PC-9 (cell line): ENCODE measurements at regions of chr11 and their contacts with region 1.

Region 1: GRCh38 chr11:33722579-33723225 is 13.5 kb downstream of the CD59 start:
- DNase-seq: peak; percentile 70 to 73
- H3K4me3 ChIP-seq: no peak overlapping the region
- H3K27ac ChIP-seq: peak overlapping the region; percentile 67
- H3K4me1 ChIP-seq: peaks cover 38% of the 10 kb centered on the region
- H3K27me3 ChIP-seq: no peaks in the 10 kb centered on the region
- CTCF ChIP-seq: no peak

Region 2: GRCh38 chr11:32137263-32137662 is 1585.4 kb before region 1 on chr11:
- CTCF ChIA-PET with region 1: interaction called, 13 read pairs
- POLR2A ChIA-PET with region 1: no interaction called
- intact Hi-C with region 1: no loop called
- DNase-seq: peak in 1 of 2 experiments; percentile 92
- H3K4me3 ChIP-seq: no peak overlapping the region
- H3K27ac ChIP-seq: peak overlapping the region; percentile 67
- H3K4me1 ChIP-seq: peaks cover 19% of the 10 kb centered on the region
- H3K27me3 ChIP-seq: no peaks in the 10 kb centered on the region
- CTCF ChIP-seq: no peak